ENCODE measurements at regions of chr19 and their contacts with region 1.

Region 1: DNA sequence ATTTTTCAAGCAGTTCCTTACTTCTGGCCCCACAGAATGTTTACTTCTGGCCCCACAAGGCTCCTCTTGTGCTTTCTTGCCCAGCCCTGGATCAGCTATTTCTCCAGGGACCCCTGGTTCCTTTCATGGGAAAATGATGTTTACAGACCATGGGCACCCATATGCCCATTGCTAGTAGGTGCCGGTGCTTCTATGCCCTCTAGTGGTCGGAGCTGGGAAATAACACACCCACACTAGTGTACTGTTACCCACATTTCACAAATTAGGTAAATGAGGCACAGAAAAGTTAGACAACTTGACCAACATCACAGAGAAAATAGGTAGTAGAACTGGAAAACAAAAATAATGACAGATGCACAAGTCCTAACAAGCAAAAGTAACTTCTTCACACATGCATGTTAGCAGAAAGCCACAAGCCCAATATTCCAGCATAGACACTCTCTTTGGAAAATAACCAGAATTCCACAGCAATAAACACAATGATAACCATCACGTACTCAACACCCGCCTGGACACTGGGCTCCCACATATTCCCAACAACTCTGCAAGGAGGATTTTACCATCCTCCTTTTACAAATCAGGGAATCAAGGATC is 1.3 kb upstream of the CEACAM6 start:
- DNase-seq: peak; percentile 71
- H3K4me3 Mint-ChIP-seq: no peak overlapping the region
- H3K27ac Mint-ChIP-seq: no peak overlapping the region
- H3K4me1 Mint-ChIP-seq: peaks cover 3% of the 10 kb centered on the region
- H3K27me3 Mint-ChIP-seq: peaks cover 35% of the 10 kb centered on the region

Region 2: DNA sequence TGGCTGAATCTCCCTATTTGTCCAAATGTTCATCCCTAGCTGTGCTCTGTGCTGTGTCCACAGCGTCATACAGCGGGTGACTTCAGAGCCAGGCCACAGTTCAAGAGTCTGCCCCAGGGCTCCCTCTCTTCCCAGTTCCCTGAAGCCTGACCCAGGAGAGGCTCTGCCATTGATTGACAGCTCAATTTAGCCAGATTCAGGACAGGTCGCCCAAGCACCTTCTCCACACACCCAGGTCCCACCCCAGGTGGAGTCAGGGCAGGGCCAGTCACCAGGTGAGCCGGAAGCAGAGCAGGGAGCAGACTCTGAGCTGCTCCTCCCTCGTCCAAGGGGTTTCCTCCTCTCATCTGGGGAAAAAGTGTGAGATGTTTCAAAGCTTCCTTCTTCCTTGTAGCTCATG is 71.6 kb before region 1 on chr19:
- CTCF ChIA-PET with region 1: no interaction called
- POLR2A ChIA-PET with region 1: no interaction called
- DNase-seq: no peak
- H3K4me3 Mint-ChIP-seq: no peak overlapping the region
- H3K27ac Mint-ChIP-seq: no peak overlapping the region
- H3K4me1 Mint-ChIP-seq: no peaks in the 10 kb centered on the region
- H3K27me3 Mint-ChIP-seq: peaks cover 26% of the 10 kb centered on the region

Region 3: GRCh38 chr19:41734617-41735016 is 19.4 kb before region 1 on chr19:
- CTCF ChIA-PET with region 1: interaction called, 23 read pairs
- POLR2A ChIA-PET with region 1: no interaction called
- DNase-seq: no peak
- H3K4me3 Mint-ChIP-seq: no peak overlapping the region
- H3K27ac Mint-ChIP-seq: no peak overlapping the region
- H3K4me1 Mint-ChIP-seq: no peaks in the 10 kb centered on the region
- H3K27me3 Mint-ChIP-seq: peaks cover 38% of the 10 kb centered on the region

Region 4: DNA sequence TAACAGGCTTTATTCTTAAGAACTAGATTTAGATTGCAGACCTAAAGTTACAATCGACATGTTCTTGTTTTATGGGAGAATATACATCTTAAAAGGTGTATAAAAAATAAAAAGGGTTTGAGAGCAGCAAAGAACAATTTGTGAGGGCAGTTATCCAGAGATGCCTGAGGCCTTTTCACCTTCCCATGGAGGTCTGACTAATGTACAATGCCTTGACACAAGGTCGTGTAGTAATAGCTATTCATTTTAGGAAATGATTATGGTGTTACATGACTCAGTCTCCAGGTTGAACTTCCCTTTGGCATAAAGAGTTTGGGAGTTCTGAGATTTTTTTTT is 21.3 kb after region 1 on chr19:
- CTCF ChIA-PET with region 1: interaction called, 69 read pairs
- POLR2A ChIA-PET with region 1: interaction called, 3 read pairs
- DNase-seq: no peak
- H3K4me3 Mint-ChIP-seq: no peak overlapping the region
- H3K27ac Mint-ChIP-seq: no peak overlapping the region
- H3K4me1 Mint-ChIP-seq: peaks cover 27% of the 10 kb centered on the region
- H3K27me3 Mint-ChIP-seq: peaks cover 80% of the 10 kb centered on the region

Region 5: GRCh38 chr19:41795031-41795461 is 41.0 kb after region 1 on chr19:
- CTCF ChIA-PET with region 1: interaction called, 76 read pairs
- POLR2A ChIA-PET with region 1: no interaction called
- DNase-seq: peak; percentile 62
- H3K4me3 Mint-ChIP-seq: no peak overlapping the region
- H3K27ac Mint-ChIP-seq: no peak overlapping the region
- H3K4me1 Mint-ChIP-seq: no peaks in the 10 kb centered on the region
- H3K27me3 Mint-ChIP-seq: peaks cover 30% of the 10 kb centered on the region

Measured in activated CD4-positive, alpha-beta memory T cell treated with anti-CD3 and anti-CD28 coated beads, Interleukin-2, amount 10 ng/mL, durations not matched to agents 7 days and 5 days (primary cell).